Activated CD8-positive, alpha-beta T cell treated with anti-CD3 and anti-CD28 coated beads for 36 hours (primary cell): ENCODE measurements at regions of chr2 and their contacts with region 1.

Region 1: DNA sequence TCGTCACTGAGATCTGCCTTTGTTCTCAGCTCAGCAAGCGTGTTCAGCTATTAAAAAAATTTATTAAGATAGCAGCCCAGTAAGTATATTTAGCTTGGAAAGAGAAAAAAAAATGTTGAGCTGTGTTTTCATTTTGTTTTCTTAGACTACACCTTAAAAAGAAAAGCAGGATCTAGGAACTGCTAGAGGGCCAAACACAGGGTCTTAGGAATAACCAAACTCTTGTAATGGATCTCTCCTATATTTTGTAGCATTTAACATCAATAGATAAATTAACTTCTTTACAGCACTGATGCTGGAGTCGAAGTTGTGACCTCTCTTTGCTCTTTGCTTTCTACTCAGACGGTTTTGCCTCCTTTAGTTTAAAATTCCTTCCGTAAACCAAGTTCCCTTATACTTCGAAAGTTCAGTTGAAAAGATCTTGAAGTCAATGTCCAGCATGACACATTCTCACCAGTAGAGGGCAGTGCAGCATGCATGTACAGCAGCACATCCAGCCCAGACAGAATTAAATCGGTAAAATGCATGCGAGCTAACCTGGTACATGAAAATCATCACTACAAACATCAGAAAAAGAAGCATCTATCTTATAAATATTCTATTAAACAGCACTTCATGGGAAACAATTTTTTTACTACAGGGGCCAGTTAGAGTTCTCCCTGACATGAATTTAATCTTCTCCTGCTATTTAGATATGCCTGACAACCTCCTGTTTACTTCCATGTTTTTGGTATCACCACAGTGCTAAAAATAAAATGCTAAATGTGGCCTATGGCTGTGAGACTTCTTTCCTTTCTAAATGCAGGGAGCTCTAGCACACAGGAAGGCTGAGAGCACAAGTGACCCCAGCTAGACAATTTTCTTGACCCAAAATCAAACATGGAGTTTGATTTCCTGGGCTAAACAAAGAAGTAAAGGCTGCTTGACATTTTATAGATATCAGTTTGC is 48.2 kb upstream of the MAP3K20 start:
- DNase-seq: peak; percentile 90
- ATAC-seq: peak; percentile 73
- H3K4me3 Mint-ChIP-seq: no peak overlapping the region
- H3K27ac Mint-ChIP-seq: no peak overlapping the region
- H3K4me1 Mint-ChIP-seq: peaks cover 3% of the 10 kb centered on the region
- H3K27me3 Mint-ChIP-seq: peaks cover 2% of the 10 kb centered on the region
- CTCF ChIP-seq: peak; percentile 87

Region 2: DNA sequence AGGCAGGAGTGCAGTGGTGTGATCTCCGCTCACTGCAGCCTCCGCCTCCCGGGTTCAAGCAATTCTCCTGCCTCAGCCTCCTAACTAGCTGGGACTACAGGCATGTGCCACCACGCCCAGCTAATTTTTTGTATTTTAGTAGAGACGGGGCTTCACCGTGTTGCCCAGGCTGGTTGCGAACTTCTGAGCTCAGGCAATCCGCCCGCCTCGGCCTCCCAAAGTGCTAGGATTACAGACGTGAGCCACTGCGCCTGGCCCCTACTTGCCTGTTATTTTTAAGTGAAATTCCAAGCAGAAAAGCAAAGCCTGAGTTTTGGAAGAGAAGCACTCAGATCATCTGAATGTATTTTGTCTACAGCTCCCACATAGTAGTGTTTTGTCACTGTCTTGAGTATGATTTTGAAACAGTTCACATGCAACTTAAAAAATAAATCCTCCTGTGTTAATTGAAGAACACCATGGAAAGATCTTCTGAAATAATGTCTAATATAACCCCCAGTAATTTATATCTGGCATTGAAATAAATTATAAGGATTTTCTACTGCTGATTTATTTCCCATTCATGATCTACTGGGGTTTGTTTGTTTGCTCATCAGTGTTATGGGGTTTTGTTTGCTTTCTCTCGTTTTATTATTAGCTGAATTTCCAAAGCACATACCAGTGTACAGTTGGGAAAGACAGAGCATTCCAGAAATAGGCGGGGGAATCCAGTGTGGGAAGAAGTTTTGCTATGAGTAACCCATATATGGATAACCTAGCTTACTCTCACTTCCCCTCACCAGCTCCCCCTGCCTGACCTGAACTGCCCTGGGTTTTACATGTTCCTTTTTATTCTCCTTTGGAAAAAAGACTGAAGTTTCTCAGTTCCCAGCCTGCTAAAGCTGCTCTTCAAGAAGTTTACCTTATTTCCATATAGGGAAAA is 31.9 kb before region 1 on chr2:
- CTCF ChIA-PET with region 1: interaction called, 13 read pairs
- POLR2A ChIA-PET with region 1: interaction called, 5 read pairs
- intact Hi-C with region 1: no loop called
- DNase-seq: no peak
- ATAC-seq: no peak
- H3K4me3 Mint-ChIP-seq: no peak overlapping the region
- H3K27ac Mint-ChIP-seq: no peak overlapping the region
- H3K4me1 Mint-ChIP-seq: no peaks in the 10 kb centered on the region
- H3K27me3 Mint-ChIP-seq: no peaks in the 10 kb centered on the region
- CTCF ChIP-seq: no peak

Region 3: GRCh38 chr2:173075781-173076580 is 48.5 kb after region 1 on chr2 and contains the start of gene MAP3K20:
- CTCF ChIA-PET with region 1: interaction called, 16 read pairs
- POLR2A ChIA-PET with region 1: no interaction called
- intact Hi-C with region 1: no loop called
- DNase-seq: peak; percentile 65
- ATAC-seq: peak; percentile 80
- H3K4me3 Mint-ChIP-seq: peak within 1 kb of the TSS; percentile 77
- H3K27ac Mint-ChIP-seq: peak within 1 kb of the TSS; percentile 72
- H3K4me1 Mint-ChIP-seq: peaks cover 14% of the 10 kb centered on the region
- H3K27me3 Mint-ChIP-seq: peaks cover 42% of the 10 kb centered on the region
- CTCF ChIP-seq: no peak
- total RNA-seq, gene MAP3K20: 8.0 to 10.2 TPM

Region 4: GRCh38 chr2:173210270-173211196 is 183.1 kb after region 1 on chr2:
- CTCF ChIA-PET with region 1: interaction called, 304 read pairs
- POLR2A ChIA-PET with region 1: no interaction called
- intact Hi-C with region 1: loop called (anchors 2 kb)
- DNase-seq: peak; percentile 69
- ATAC-seq: peak; percentile 94
- H3K4me3 Mint-ChIP-seq: no peak overlapping the region
- H3K27ac Mint-ChIP-seq: no peak overlapping the region
- H3K4me1 Mint-ChIP-seq: peaks cover 4% of the 10 kb centered on the region
- H3K27me3 Mint-ChIP-seq: peaks cover 2% of the 10 kb centered on the region
- CTCF ChIP-seq: peak; percentile 89

Region 5: GRCh38 chr2:173402405-173402974 is 375.0 kb after region 1 on chr2:
- CTCF ChIA-PET with region 1: interaction called, 11 read pairs
- POLR2A ChIA-PET with region 1: no interaction called
- intact Hi-C with region 1: no loop called
- DNase-seq: peak; percentile 84
- ATAC-seq: peak; percentile 87
- H3K4me3 Mint-ChIP-seq: no peak overlapping the region
- H3K27ac Mint-ChIP-seq: no peak overlapping the region
- H3K4me1 Mint-ChIP-seq: peaks cover 4% of the 10 kb centered on the region
- H3K27me3 Mint-ChIP-seq: peaks cover 34% of the 10 kb centered on the region
- CTCF ChIP-seq: peak; percentile 81